ENCODE measurements at regions of chrX and their contacts with region 1.

Region 1: GRCh38 chrX:74377282-74377681 is 44.0 kb upstream of the SLC16A2 start:
- DNase-seq: no peak
- H3K4me3 ChIP-seq: no peak overlapping the region
- H3K27ac ChIP-seq: no peak overlapping the region
- H3K4me1 ChIP-seq: no peaks in the 10 kb centered on the region
- H3K27me3 ChIP-seq: no peaks in the 10 kb centered on the region
- CTCF ChIP-seq: no peak
- POLR2A ChIP-seq: no peak

Region 2: GRCh38 chrX:73447311-73447794 is 929.9 kb before region 1 on chrX:
- intact Hi-C with region 1: loop called (anchors 5 kb)
- DNase-seq: no peak
- H3K4me3 ChIP-seq: no peak overlapping the region
- H3K27ac ChIP-seq: no peak overlapping the region
- H3K4me1 ChIP-seq: no peaks in the 10 kb centered on the region
- H3K27me3 ChIP-seq: no peaks in the 10 kb centered on the region
- CTCF ChIP-seq: no peak
- POLR2A ChIP-seq: no peak

Region 3: DNA sequence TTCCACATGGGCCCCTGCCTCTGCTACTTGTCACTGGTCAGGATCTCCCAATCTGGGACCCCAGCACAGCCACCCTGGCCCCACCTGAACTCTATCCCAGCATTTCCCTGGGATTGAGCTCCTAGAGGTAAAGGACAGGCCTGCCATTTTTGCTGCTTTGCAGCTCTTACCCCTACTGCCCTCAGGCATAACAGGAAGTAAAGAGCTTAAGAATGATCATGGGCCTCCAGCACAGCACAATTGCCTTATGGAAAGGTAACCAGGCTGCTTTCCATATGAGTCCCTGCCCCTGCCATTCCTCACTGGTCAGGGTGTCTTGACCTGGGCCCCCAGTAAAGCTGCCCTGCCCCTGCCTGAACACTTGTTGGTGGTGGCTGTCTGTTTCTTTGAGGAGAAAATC is 328.1 kb before region 1 on chrX:
- intact Hi-C with region 1: no loop called
- DNase-seq: no peak
- H3K4me3 ChIP-seq: no peak overlapping the region
- H3K27ac ChIP-seq: no peak overlapping the region
- H3K4me1 ChIP-seq: no peaks in the 10 kb centered on the region
- H3K27me3 ChIP-seq: no peaks in the 10 kb centered on the region
- CTCF ChIP-seq: no peak
- POLR2A ChIP-seq: no peak